MCF 10A (cell line): ENCODE measurements at regions of chr2 and their contacts with region 1.

Region 1: DNA sequence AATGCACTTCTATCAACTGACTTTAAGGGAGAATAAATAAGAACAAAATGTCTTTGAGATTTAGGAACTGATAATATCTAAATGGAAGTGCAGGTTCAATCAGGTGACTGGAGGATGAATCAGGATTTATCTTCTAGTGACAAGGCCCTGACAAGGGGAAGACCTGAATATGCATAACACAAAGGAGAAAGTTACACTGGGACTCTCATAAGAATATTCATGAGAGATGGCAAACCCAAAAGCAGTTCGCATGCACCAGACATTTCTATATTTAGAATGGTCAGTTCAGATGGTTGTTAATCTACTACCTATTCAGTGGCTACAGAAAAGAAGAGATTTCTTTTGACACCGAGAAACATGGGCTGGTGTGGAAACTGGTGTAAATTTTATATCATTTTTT is 1771.3 kb upstream of the LRRTM1 start:
- DNase-seq: no peak
- H3K4me3 Mint-ChIP-seq: no peak overlapping the region
- H3K27ac Mint-ChIP-seq: no peak overlapping the region
- H3K4me1 Mint-ChIP-seq: no peaks in the 10 kb centered on the region
- H3K27me3 Mint-ChIP-seq: no peaks in the 10 kb centered on the region
- CTCF ChIP-seq: no peak

Region 2: DNA sequence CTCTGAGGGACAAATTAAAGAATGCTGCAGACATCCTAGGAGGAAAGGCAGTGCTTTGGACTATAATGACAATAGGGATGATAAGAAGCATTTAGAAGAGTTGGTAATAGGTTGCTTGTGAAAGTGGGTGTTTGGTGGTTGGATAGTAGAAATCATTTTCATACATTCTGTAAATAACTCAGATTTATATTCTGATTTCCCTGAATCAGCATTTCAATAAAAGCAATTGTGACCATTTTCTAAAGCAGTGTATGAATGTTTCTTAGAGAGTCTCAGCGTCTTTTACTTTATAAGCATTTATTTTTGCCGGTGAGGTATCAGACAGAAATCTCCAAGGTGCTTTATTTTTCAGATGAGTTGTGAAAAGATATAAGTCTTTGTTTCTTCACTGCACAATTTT is 672.4 kb before region 1 on chr2:
- CTCF ChIA-PET with region 1: no interaction called
- POLR2A ChIA-PET with region 1: no interaction called
- intact Hi-C with region 1: no loop called
- DNase-seq: no peak
- H3K4me3 Mint-ChIP-seq: no peak overlapping the region
- H3K27ac Mint-ChIP-seq: no peak overlapping the region
- H3K4me1 Mint-ChIP-seq: no peaks in the 10 kb centered on the region
- H3K27me3 Mint-ChIP-seq: no peaks in the 10 kb centered on the region
- CTCF ChIP-seq: no peak

Region 3: GRCh38 chr2:82985572-82986197 is 909.8 kb after region 1 on chr2:
- CTCF ChIA-PET with region 1: no interaction called
- POLR2A ChIA-PET with region 1: no interaction called
- intact Hi-C with region 1: loop called (anchors 5 kb)
- DNase-seq: no peak
- H3K4me3 Mint-ChIP-seq: no peak overlapping the region
- H3K27ac Mint-ChIP-seq: no peak overlapping the region
- H3K4me1 Mint-ChIP-seq: no peaks in the 10 kb centered on the region
- H3K27me3 Mint-ChIP-seq: no peaks in the 10 kb centered on the region
- CTCF ChIP-seq: no peak